IMR-90 (cell line): ENCODE measurements at regions of chr19 and their contacts with region 1.

Region 1: GRCh38 chr19:21092109-21092508 is 10.1 kb downstream of the ZNF714 start:
- DNase-seq: peak; percentile 14
- ATAC-seq: peak; percentile 63
- H3K4me3 ChIP-seq: no peak overlapping the region
- H3K27ac ChIP-seq: peak overlapping the region; percentile 16; the same call in 1 of the 2 replicates
- H3K4me1 ChIP-seq: peaks cover 2% of the 10 kb centered on the region; the same call in 1 of the 2 replicates
- H3K27me3 ChIP-seq: no peaks in the 10 kb centered on the region
- CTCF ChIP-seq: no peak
- POLR2A ChIP-seq: no peak
- RAD21 ChIP-seq: no peak

Region 2: DNA sequence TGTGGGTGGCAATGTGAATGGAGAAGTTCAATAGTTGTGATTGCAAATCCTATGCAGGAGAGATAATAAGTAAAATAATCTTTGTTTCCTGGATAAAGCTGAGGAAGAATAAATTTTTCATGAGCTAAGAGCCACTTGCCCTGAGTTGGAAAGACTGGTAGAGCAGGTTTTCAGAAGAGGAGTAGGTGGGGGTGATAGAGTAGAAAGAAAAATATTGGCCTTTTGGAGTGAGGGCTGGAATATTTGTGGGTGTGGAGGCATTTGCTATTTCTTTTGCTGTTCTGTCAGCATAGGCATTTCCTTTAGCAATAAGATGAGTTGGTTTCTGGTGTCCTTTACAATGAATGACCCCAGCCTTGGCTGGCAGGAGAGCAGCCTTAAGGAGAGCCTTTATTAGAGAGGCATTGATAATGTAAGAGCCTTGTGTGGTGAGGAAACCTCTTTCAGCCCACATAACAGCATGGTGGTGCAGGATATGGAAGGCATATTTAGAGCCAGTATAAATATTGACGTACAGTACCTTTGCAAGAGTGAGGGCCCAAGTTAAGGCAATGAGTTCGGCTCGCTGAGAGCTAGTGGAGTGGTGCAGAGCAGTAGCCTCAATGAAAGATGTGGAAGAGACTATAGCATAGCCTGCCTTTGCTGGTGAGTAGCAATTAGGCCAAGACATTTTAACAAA is 38.1 kb after region 1 on chr19:
- CTCF ChIA-PET with region 1: no interaction called
- POLR2A ChIA-PET with region 1: no interaction called
- dilution Hi-C with region 1: no loop called
- in situ Hi-C with region 1: no loop called
- intact Hi-C with region 1: no loop called
- DNase-seq: no peak
- ATAC-seq: no peak
- H3K4me3 ChIP-seq: no peak overlapping the region
- H3K27ac ChIP-seq: no peak overlapping the region
- H3K4me1 ChIP-seq: no peaks in the 10 kb centered on the region
- H3K27me3 ChIP-seq: no peaks in the 10 kb centered on the region
- CTCF ChIP-seq: no peak
- POLR2A ChIP-seq: no peak
- RAD21 ChIP-seq: no peak

Region 3: DNA sequence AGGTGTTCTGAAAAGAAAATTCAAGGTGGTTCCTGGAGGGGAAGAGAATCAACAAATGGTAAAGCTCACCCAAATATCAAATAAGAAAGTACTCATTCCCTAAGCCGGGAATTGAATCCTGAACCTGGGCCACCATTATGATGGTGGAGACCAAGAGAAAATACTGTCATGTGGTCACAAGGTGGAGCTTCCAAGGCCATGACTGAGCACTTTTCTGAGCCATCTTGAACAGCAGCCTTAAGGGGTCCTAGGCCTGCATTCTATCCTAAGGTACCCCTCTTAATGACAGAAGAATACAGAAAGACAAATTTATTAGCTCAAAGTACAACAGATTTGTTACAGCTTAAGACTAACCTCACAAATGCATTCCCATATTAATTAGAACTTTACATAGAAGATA is 59.4 kb after region 1 on chr19:
- CTCF ChIA-PET with region 1: no interaction called
- POLR2A ChIA-PET with region 1: no interaction called
- dilution Hi-C with region 1: no loop called
- in situ Hi-C with region 1: no loop called
- intact Hi-C with region 1: loop called (anchors 1 kb)
- DNase-seq: no peak
- ATAC-seq: no peak
- H3K4me3 ChIP-seq: no peak overlapping the region
- H3K27ac ChIP-seq: no peak overlapping the region
- H3K4me1 ChIP-seq: no peaks in the 10 kb centered on the region
- H3K27me3 ChIP-seq: no peaks in the 10 kb centered on the region
- CTCF ChIP-seq: no peak
- POLR2A ChIP-seq: no peak
- RAD21 ChIP-seq: no peak

Region 4: DNA sequence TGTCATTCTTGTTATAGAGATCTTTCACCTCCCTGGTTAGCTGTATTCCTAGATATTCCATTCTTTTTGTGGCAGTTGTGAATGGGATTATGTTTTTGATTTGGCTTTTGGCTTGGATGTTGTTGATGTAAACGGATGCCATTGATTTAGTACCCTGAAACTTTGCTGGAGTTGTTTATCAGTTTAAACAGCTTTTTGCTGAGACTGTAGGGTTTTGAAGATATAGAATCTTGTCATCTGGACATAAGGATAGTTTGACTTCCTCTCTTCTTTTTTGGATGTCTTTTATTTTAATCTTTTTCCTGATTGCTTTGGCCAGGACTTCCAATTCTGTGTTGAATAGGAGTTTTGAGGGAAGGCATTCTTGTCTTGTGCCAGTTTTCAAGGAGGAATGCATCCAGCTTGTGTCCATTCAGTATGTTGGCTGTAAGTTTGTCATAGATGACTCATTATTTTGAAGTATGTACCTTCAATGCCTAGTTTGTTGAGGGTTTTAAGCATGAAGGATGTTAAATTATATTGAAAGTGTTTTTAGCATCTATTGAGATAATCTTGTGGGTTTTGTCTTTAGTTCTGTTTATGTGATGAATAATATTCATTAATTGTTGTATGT is 66.5 kb after region 1 on chr19:
- CTCF ChIA-PET with region 1: no interaction called
- POLR2A ChIA-PET with region 1: no interaction called
- dilution Hi-C with region 1: no loop called
- in situ Hi-C with region 1: no loop called
- intact Hi-C with region 1: loop called (anchors 1 kb)
- DNase-seq: peak; percentile 68
- ATAC-seq: peak; percentile 74
- H3K4me3 ChIP-seq: no peak overlapping the region
- H3K27ac ChIP-seq: no peak overlapping the region
- H3K4me1 ChIP-seq: no peaks in the 10 kb centered on the region
- H3K27me3 ChIP-seq: no peaks in the 10 kb centered on the region
- CTCF ChIP-seq: no peak
- POLR2A ChIP-seq: no peak
- RAD21 ChIP-seq: no peak

Region 5: GRCh38 chr19:21197590-21198295 is 105.6 kb after region 1 on chr19:
- CTCF ChIA-PET with region 1: no interaction called
- POLR2A ChIA-PET with region 1: no interaction called
- dilution Hi-C with region 1: no loop called
- in situ Hi-C with region 1: no loop called
- intact Hi-C with region 1: no loop called
- DNase-seq: peak; percentile 3
- ATAC-seq: no peak
- H3K4me3 ChIP-seq: no peak overlapping the region
- H3K27ac ChIP-seq: no peak overlapping the region
- H3K4me1 ChIP-seq: no peaks in the 10 kb centered on the region
- H3K27me3 ChIP-seq: no peaks in the 10 kb centered on the region
- CTCF ChIP-seq: no peak
- POLR2A ChIP-seq: no peak
- RAD21 ChIP-seq: no peak